ENCODE measurements at regions of chr21 and their contacts with region 1.

Region 1: DNA sequence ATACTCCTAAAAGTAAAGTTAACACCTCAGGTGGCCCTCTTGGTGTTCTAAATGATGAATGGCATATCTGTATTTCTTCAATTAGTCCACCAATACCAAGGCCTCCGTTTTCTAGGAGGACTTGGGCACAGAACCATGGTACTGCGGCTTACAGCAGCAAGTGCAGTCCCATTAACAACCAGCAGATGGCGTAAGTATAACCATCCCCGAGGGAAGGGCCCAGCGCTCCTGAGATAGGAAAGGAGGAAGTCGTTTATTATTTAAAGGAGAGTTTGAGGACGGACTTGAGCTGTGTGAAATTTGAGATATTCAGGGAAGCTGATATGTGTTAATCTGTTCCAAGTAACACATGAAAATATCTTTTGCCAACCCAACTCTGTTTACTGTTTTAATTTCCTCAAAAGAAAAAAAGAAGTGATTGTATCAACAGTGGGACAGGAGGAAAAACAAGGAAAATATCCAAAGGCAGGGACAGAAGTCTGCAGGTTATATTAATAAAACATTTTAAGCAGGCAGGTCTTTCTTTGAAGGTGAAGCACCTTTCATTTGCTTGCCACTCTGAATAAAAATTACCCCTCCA is 37.7 kb upstream of the KCNJ15 start:
- DNase-seq: peak; percentile 74
- H3K4me3 ChIP-seq: no peak overlapping the region
- H3K27ac ChIP-seq: no peak overlapping the region
- H3K4me1 ChIP-seq: peaks cover 0 to 3% (median 0%) of the 10 kb centered on the region in 4 donors
- H3K27me3 ChIP-seq: no peaks in the 10 kb centered on the region
- CTCF ChIP-seq: peak; percentile 92 to 97 (median 96)
- EP300 ChIP-seq: no peak
- POLR2A ChIP-seq: no peak

Region 2: GRCh38 chr21:38148046-38148445 is 71.1 kb before region 1 on chr21:
- in situ Hi-C with region 1: no loop called
- intact Hi-C with region 1: no loop called
- DNase-seq: no peak
- H3K4me3 ChIP-seq: no peak overlapping the region
- H3K27ac ChIP-seq: no peak overlapping the region
- H3K4me1 ChIP-seq: no peaks in the 10 kb centered on the region
- H3K27me3 ChIP-seq: peaks cover 23% of the 10 kb centered on the region
- CTCF ChIP-seq: no peak
- EP300 ChIP-seq: no peak
- POLR2A ChIP-seq: no peak

Region 3: DNA sequence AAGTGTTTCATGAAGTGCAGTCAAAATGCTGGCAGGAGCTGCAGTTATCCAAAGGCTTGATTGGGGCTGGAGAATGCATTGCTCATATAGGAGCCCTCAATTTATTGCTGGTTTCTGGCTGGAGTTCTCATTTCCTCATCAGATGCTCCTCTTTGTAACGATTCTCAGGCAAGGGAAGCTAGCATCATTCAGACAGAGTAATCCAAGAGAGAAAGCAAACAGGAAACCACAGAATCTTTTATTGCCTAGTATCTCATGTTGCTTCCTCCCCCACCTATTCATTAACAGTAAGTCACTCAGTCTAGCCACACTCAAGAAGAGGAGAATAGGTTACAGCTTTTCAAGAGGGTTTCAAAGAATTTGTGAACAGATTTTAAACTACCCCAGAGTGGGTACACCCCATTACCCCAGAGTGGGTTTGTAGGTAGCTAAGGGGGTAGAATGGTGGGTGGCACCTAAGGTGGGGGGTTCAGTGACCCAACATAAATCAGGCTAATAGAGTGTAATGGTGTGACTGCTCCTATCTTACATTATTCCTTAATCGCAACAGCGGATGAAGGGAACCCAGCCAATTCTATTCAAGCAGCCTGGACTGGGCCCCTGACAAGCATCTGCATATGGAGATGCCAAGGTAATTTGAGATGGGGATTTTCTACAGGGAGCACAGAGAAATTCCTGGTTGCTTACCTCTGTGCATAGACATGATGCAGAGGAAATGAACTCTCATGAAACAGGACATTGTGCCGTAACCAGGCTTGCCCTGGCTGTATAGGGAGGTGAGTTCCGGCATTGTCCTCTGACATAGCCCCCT is 104.8 kb after region 1 on chr21:
- in situ Hi-C with region 1: no loop called
- intact Hi-C with region 1: no loop called
- DNase-seq: no peak
- H3K4me3 ChIP-seq: no peak overlapping the region
- H3K27ac ChIP-seq: no peak overlapping the region
- H3K4me1 ChIP-seq: no peaks in the 10 kb centered on the region
- H3K27me3 ChIP-seq: peaks cover 4% of the 10 kb centered on the region
- CTCF ChIP-seq: no peak
- EP300 ChIP-seq: no peak
- POLR2A ChIP-seq: no peak

Region 4: GRCh38 chr21:38363693-38364092 is 144.6 kb after region 1 on chr21:
- in situ Hi-C with region 1: loop called in 2 of 4 experiments (anchors 10 kb)
- intact Hi-C with region 1: no loop called
- DNase-seq: no peak
- H3K4me3 ChIP-seq: no peak overlapping the region
- H3K27ac ChIP-seq: no peak overlapping the region
- H3K4me1 ChIP-seq: no peaks in the 10 kb centered on the region
- H3K27me3 ChIP-seq: no peaks in the 10 kb centered on the region
- CTCF ChIP-seq: no peak
- EP300 ChIP-seq: no peak
- POLR2A ChIP-seq: no peak

Measured in transverse colon (tissue), 4 donors.